Esophagus muscularis mucosa (tissue), 4 donors: ENCODE measurements at regions of chr11 and their contacts with region 1.

Region 1: DNA sequence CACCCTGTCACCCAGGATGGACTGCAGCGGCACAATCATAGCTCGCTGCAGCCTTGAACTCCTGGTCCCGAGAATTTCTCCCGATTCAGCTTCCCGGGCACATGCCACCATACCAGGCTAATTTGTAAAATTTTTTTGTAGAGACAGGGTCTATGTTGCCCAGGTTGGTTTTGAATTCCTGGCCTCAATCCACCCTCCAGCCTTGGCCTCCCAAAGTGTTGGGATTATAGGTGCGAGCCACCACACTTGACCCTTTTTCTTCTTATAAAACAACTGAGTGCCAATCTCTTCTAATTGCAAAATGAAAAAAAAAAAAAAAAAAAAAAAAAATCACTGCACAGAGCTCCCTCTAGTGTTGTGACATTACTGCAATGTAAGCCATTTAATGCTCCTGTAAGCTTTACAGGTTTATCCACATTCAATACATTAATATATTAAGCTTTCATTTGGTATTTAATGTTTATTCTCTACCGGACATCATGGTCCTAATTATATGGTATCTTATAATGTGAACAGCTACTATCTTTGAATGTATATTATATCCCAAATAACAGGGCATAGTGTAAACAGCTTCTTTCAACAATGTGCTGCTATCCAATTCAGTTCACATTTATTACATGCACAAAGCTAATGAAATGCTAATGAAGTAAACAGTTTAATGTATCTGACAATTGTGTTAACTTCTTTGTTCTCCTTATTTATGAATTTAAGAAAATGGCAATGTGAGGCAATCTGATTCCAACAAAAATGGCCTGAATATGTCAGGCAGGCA is 44.6 kb downstream of the COPB1 start:
- DNase-seq: no peak
- H3K4me3 ChIP-seq: no peak overlapping the region
- H3K27ac ChIP-seq: peak overlapping the region in 1 of 4 donors; percentile 30
- H3K4me1 ChIP-seq: peaks cover 0 to 4% (median 2%) of the 10 kb centered on the region in 4 donors
- H3K27me3 ChIP-seq: no peaks in the 10 kb centered on the region
- CTCF ChIP-seq: peak; percentile 54 to 65 (median 59)
- EP300 ChIP-seq: no peak
- POLR2A ChIP-seq: no peak

Region 2: DNA sequence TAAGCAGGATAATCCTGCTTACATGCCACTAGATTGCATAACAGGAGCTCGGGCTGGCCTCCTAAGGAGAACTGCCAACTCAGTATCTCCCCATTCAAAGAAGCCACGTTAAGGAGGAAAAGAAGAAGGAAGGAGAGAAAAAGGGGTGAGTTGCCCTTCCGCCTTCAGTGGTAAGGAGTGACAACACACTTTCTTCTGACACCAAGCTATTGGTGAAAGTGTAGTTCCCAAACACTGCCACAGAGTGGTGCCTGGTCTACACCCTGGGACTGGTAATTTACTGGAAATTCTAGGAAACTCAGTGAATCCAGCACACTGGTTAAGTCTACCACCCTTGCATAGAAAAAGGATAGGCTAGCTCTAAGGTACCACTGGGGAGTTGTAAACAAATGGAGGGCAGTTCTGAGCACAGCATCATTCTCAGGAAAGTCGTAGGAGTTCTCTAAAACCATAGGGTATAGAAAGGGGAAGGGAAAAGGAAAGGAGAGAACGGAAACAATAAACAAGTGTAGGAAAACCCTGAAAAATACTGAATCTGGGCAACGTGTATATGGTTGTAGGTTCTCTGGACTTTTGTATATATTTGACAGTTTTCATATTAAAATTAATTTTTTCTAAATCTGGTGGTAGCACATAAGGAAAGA is 154.3 kb before region 1 on chr11:
- intact Hi-C with region 1: loop called (anchors 5 kb)
- DNase-seq: no peak
- H3K4me3 ChIP-seq: no peak overlapping the region
- H3K27ac ChIP-seq: no peak overlapping the region
- H3K4me1 ChIP-seq: peaks cover 8 to 41% (median 24%) of the 10 kb centered on the region in 4 donors
- H3K27me3 ChIP-seq: no peaks in the 10 kb centered on the region
- CTCF ChIP-seq: peak; percentile 70 to 84 (median 71)
- EP300 ChIP-seq: peak; percentile 24
- POLR2A ChIP-seq: no peak

Region 3: DNA sequence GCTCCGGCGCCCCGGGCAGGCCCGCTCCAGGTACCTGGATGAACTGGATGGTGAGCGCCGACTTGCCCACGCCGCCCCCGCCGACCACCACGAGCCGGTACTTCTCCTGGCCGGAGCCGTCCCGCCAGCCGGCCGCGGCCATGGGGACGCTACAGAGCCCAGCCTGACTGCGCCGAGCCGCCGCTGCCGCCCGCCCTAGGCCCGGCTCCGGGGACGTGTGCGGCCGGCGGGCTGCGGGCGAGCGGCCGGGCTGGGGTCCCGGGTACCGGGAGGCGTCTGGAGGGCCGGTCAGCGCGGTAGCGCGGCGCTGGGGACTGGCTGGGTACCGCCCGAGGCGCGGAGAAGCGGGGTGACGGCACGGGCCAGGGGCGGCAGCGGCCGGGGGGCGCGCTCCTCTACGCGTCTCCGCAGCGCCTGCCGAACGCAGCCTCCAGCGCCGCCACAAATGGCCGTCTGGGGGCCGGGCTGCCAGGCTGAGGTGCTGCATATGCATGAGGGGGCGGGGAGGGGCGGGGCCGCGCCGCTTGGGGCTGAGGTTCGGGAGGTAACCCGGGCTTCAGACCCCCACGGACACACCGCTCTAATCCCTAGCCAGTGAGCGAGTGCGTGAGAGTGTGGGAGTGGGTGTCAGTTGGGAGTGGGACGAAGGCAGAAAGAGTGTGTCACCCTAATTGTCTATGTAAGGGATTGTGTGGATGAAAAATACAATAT is 96.2 kb before region 1 on chr11 and contains the start of gene RRAS2:
- intact Hi-C with region 1: loop called (anchors 5 kb)
- DNase-seq: peak; percentile 96
- H3K4me3 ChIP-seq: peak within 1 kb of the TSS; percentile 82 to 98 (median 92)
- H3K27ac ChIP-seq: peak within 1 kb of the TSS; percentile 80 to 90 (median 88)
- H3K4me1 ChIP-seq: peaks cover 8 to 29% (median 19%) of the 10 kb centered on the region in 4 donors
- H3K27me3 ChIP-seq: no peaks in the 10 kb centered on the region
- CTCF ChIP-seq: no peak
- EP300 ChIP-seq: no peak
- POLR2A ChIP-seq: peak; percentile 75
- total RNA-seq, gene RRAS2: 40.7 to 75.4 (median 58.0) TPM

Region 4: DNA sequence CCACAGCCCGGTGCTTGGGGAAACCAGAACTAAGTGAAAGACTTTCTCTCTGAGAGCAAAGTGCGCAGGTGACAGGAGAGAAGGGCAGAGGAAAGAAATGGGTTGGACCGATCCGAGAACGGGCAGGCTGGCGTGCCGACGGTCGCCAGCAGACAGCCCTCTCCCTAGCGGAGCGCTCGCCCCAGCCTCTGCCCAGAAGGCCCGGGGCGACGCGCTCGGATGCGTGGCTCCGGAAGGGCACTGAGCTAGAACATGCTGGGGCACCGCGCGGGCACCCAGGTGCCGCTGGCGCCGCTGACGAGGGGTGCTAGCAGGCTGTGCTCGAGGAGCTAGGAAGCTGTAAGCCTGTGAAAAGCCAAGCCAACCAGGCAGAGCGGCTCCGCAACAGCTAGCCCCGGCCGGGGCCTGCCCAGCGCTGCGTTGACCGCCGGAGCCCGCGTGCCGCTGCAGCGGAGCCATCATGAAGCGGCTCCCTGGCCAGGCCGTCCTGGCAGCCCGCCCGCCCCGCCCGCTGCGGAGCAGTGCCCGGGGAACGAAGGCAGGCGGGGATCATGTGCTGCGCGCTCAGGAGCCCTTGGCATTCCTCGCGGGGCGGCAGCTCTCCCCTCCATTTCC is 74.0 kb before region 1 on chr11:
- intact Hi-C with region 1: loop called (anchors 10 kb)
- DNase-seq: no peak
- H3K4me3 ChIP-seq: peak overlapping the region; percentile 56 to 65 (median 58)
- H3K27ac ChIP-seq: peak overlapping the region; percentile 78 to 83 (median 78)
- H3K4me1 ChIP-seq: peaks cover 13 to 26% (median 23%) of the 10 kb centered on the region in 4 donors
- H3K27me3 ChIP-seq: no peaks in the 10 kb centered on the region
- CTCF ChIP-seq: peak in 1 of 3 experiments; percentile 15
- EP300 ChIP-seq: no peak
- POLR2A ChIP-seq: no peak